Endothelial cell of umbilical vein (primary cell): ENCODE measurements at regions of chr3 and their contacts with region 1.

Region 1: GRCh38 chr3:185677146-185677829 is 91.2 kb downstream of the SENP2 start:
- DNase-seq: peak; percentile 81
- H3K4me3 ChIP-seq: no peak overlapping the region
- H3K27ac ChIP-seq: peak overlapping the region; percentile 36
- H3K4me1 ChIP-seq: peaks cover 7% of the 10 kb centered on the region
- H3K27me3 ChIP-seq: no peaks in the 10 kb centered on the region
- CTCF ChIP-seq: peak; percentile 67 to 70
- POLR2A ChIP-seq: no peak

Region 2: GRCh38 chr3:185605566-185605965 is 71.7 kb before region 1 on chr3:
- CTCF ChIA-PET with region 1: no interaction called
- POLR2A ChIA-PET with region 1: no interaction called
- dilution Hi-C with region 1: no loop called
- intact Hi-C with region 1: no loop called
- DNase-seq: peak; percentile 20
- H3K4me3 ChIP-seq: no peak overlapping the region
- H3K27ac ChIP-seq: no peak overlapping the region
- H3K4me1 ChIP-seq: no peaks in the 10 kb centered on the region
- H3K27me3 ChIP-seq: no peaks in the 10 kb centered on the region
- CTCF ChIP-seq: no peak
- POLR2A ChIP-seq: no peak

Region 3: GRCh38 chr3:185702262-185703225 is 25.3 kb after region 1 on chr3:
- CTCF ChIA-PET with region 1: interaction called, 11 read pairs
- POLR2A ChIA-PET with region 1: no interaction called
- dilution Hi-C with region 1: no loop called
- intact Hi-C with region 1: no loop called
- DNase-seq: peak; percentile 62
- H3K4me3 ChIP-seq: peak overlapping the region in 1 of 3 experiments; percentile 16
- H3K27ac ChIP-seq: peak overlapping the region; percentile 49
- H3K4me1 ChIP-seq: peaks cover 41% of the 10 kb centered on the region
- H3K27me3 ChIP-seq: no peaks in the 10 kb centered on the region
- CTCF ChIP-seq: no peak
- POLR2A ChIP-seq: no peak

Region 4: DNA sequence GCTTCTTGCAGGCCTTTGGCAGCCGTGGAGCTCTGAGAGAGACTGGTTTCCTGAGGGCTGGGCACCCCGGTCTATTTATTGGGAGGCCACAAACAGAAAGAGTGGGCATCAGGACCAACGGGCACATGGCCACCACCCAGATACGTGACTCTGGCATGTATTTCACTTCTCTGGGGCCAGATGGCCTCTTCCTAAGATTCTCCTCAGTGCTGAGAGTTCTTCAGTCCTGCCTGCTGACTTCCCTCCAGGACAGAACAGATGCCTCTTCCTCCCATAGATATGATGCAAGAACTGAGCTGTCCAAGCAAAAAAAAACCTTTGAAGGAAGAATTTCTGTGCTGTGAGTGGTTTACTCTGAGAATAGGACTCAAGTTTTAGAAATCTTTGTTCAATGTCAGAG is 39.8 kb after region 1 on chr3:
- CTCF ChIA-PET with region 1: interaction called, 26 read pairs
- POLR2A ChIA-PET with region 1: no interaction called
- dilution Hi-C with region 1: no loop called
- intact Hi-C with region 1: no loop called
- DNase-seq: peak; percentile 39
- H3K4me3 ChIP-seq: no peak overlapping the region
- H3K27ac ChIP-seq: peak overlapping the region; percentile 27
- H3K4me1 ChIP-seq: peaks cover 33% of the 10 kb centered on the region
- H3K27me3 ChIP-seq: no peaks in the 10 kb centered on the region
- CTCF ChIP-seq: no peak
- POLR2A ChIP-seq: no peak

Region 5: DNA sequence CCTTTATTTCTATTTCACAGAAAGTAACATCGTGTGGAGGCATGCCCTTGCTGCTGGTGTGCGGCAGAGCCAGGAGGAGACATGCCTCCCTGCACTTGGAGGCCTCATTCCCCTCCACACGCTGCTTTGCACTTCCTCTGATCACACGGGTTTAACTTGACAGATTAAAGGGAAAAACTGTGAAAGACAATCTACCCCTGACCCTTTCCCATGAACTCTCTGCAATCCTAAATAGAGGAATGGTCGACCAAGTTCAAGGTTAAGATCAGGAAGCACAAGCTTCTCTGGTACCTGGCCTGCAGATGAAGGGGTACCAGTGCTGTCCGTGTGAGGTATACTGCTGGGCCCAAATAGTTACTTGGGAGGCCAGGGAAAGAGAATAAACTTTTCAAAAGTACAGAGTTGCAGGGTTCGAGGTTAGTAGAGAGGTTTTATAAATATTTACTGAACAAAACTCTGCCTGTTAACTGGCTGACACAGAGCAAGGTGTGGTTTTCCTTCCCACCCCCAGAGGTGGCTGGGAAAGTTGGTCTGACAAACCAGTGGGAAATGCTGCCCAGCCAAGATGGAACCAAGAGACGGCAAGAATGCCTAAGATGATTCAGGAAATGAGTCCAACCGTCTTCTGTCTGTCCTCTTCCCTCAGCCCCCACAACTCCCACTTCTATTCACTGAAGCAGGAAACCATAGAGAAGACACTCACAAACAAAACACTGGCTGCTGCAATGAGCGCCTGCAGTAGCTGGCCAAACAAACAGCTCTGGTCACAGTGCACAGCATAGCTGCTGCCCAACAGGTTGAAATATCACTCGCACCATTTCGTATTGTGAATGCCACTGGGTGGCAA is 67.9 kb after region 1 on chr3:
- CTCF ChIA-PET with region 1: interaction called, 18 read pairs
- POLR2A ChIA-PET with region 1: no interaction called
- dilution Hi-C with region 1: no loop called
- intact Hi-C with region 1: no loop called
- DNase-seq: peak; percentile 81
- H3K4me3 ChIP-seq: no peak overlapping the region
- H3K27ac ChIP-seq: peak overlapping the region; percentile 79
- H3K4me1 ChIP-seq: peaks cover 29% of the 10 kb centered on the region
- H3K27me3 ChIP-seq: no peaks in the 10 kb centered on the region
- CTCF ChIP-seq: no peak
- POLR2A ChIP-seq: peak; percentile 55

Region 6: DNA sequence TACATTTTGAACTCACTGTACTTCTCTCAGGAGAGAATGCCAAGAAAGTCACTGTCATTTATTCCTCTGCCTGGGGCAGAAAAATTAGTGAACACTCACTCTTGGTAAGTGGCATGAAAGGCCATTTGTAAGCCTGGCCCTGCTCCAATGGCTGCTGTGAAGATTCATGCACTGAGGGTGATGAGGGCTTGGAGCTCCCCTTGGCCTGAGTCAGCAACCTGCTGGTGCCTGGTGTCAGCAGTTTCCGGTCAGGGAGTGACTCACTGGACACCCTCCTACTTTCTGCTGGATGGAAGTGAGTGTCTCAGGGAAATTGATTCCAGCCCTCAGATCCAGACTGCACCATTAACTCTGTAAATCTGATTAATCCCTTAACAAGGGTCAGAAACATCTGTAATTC is 222.9 kb after region 1 on chr3:
- CTCF ChIA-PET with region 1: interaction called, 17 read pairs
- POLR2A ChIA-PET with region 1: no interaction called
- dilution Hi-C with region 1: no loop called
- intact Hi-C with region 1: no loop called
- DNase-seq: peak; percentile 82
- H3K4me3 ChIP-seq: no peak overlapping the region
- H3K27ac ChIP-seq: no peak overlapping the region
- H3K4me1 ChIP-seq: peaks cover 6% of the 10 kb centered on the region
- H3K27me3 ChIP-seq: no peaks in the 10 kb centered on the region
- CTCF ChIP-seq: no peak
- POLR2A ChIP-seq: no peak